ENCODE measurements at regions of chr20 and their contacts with region 1.

Region 1: GRCh38 chr20:33731693-33732165 is at the start of gene ZNF341:
- DNase-seq: no peak
- ATAC-seq: peak; percentile 79
- H3K4me3 Mint-ChIP-seq: peak within 1 kb of the TSS; percentile 90
- H3K27ac Mint-ChIP-seq: peak within 1 kb of the TSS; percentile 93
- H3K4me1 Mint-ChIP-seq: peaks cover 26% of the 10 kb centered on the region
- H3K27me3 Mint-ChIP-seq: no peaks in the 10 kb centered on the region
- CTCF ChIP-seq: no peak
- total RNA-seq, gene ZNF341: 9.2 and 10.1 TPM in 2 replicates

Region 2: DNA sequence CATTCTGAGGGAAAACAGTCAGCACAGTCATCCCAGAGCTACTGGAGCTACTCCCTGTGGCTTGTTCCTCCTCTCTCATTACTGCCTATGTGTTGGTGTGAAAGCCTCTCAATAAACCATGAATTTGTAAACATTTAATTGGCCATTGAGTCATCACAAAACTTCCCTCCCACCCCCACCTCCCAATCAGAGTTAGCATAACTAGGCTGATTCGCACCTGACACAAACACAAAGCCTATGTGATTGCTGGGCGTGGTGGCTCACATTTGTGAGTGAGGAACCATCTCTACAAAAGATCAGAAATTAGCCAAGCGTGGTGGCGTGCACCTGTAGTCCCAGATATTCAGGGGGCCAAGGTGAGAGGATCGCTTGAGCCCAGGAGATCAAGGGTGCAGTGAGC is 271.0 kb before region 1 on chr20:
- CTCF ChIA-PET with region 1: no interaction called
- POLR2A ChIA-PET with region 1: no interaction called
- intact Hi-C with region 1: loop called (anchors 1 kb)
- DNase-seq: no peak
- ATAC-seq: no peak
- H3K4me3 Mint-ChIP-seq: no peak overlapping the region
- H3K27ac Mint-ChIP-seq: no peak overlapping the region
- H3K4me1 Mint-ChIP-seq: peaks cover 18% of the 10 kb centered on the region
- H3K27me3 Mint-ChIP-seq: no peaks in the 10 kb centered on the region
- CTCF ChIP-seq: no peak

Region 3: DNA sequence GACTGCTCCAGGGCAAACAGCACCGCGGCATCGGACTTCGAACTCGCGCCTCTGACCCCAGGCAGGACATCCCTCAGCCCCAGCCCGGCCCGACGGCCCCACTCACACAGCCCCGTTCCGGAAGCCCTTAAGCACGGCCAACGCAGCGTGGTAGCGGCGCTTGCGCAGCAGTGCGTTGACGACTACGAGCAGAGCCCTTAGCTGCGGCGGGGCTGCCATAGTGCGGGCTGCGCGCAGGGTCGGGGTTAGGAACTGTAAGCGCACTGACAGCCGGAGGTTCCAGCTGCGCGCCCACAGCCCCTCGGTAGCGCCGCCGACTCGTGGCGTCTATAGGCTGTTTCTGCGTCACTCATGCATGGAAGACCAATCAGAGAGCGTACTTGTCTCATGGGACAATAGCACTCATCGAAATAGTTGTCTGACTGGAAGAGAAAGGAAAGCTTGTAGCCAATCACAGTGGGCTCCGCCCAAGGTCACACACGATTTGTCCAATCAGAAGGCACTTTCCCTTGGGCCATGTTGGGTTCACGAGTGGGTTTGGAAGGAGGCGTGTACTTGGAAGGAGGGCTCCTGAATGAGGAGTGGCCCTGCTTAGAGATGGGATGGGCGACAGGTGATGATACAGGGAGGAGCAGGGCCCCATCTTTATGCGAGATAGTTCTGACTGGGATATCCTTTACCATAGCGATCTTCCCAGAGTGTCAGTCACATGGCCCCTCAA is 11.6 kb before region 1 on chr20 and contains the start of gene PXMP4:
- CTCF ChIA-PET with region 1: no interaction called
- POLR2A ChIA-PET with region 1: interaction called, 31 read pairs
- intact Hi-C with region 1: loop called (anchors 1 kb)
- DNase-seq: peak; percentile 67
- ATAC-seq: peak; percentile 97
- H3K4me3 Mint-ChIP-seq: peak within 1 kb of the TSS; percentile 93
- H3K27ac Mint-ChIP-seq: peak within 1 kb of the TSS; percentile 91
- H3K4me1 Mint-ChIP-seq: peaks cover 27% of the 10 kb centered on the region
- H3K27me3 Mint-ChIP-seq: no peaks in the 10 kb centered on the region
- CTCF ChIP-seq: no peak
- total RNA-seq, gene PXMP4: 6.8 and 7.7 TPM in 2 replicates

Region 4: DNA sequence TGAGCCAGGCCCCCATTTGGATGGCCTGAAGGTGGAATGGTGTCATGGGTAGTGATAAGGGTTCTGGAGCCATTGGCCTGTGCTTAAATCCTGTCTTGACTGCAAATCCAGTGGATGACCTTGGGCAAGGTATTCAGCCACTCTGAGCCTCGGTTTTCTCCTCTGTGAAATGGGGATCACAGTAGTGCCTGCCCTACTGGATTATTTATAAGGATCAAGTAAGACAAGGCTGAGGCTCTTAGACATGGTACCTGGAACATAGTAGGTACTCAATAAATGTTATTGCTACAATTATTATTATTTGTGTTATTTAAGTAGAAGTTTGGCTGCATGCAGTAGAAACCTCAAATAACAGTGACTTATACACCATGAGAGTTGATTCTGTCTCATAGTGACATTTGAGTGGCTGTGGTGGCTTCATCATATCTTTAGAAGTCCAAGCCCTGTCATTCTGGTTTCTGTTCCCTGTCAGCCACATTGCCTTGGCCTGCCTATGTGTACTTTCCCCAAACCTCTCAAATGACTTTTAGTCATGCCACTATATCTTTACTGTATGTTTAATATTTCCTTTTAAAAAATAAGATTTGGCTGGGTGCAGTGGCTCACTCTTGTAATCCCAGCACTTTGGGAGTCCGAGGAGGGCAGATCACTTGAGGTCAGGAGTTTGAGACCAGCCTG is 41.8 kb after region 1 on chr20:
- CTCF ChIA-PET with region 1: interaction called, 7 read pairs
- POLR2A ChIA-PET with region 1: interaction called, 102 read pairs
- intact Hi-C with region 1: loop called (anchors 1 kb)
- DNase-seq: no peak
- ATAC-seq: peak; percentile 65
- H3K4me3 Mint-ChIP-seq: peak overlapping the region; percentile 41
- H3K27ac Mint-ChIP-seq: peak overlapping the region; percentile 93
- H3K4me1 Mint-ChIP-seq: peaks cover 64% of the 10 kb centered on the region
- H3K27me3 Mint-ChIP-seq: no peaks in the 10 kb centered on the region
- CTCF ChIP-seq: no peak

Region 5: GRCh38 chr20:33862709-33863403 is 131.1 kb after region 1 on chr20:
- CTCF ChIA-PET with region 1: interaction called, 3 read pairs
- POLR2A ChIA-PET with region 1: interaction called, 8 read pairs
- intact Hi-C with region 1: loop called (anchors 5 kb)
- DNase-seq: peak; percentile 54
- ATAC-seq: peak; percentile 60
- H3K4me3 Mint-ChIP-seq: no peak overlapping the region
- H3K27ac Mint-ChIP-seq: no peak overlapping the region
- H3K4me1 Mint-ChIP-seq: peaks cover 26% of the 10 kb centered on the region
- H3K27me3 Mint-ChIP-seq: no peaks in the 10 kb centered on the region
- CTCF ChIP-seq: no peak

Region 6: DNA sequence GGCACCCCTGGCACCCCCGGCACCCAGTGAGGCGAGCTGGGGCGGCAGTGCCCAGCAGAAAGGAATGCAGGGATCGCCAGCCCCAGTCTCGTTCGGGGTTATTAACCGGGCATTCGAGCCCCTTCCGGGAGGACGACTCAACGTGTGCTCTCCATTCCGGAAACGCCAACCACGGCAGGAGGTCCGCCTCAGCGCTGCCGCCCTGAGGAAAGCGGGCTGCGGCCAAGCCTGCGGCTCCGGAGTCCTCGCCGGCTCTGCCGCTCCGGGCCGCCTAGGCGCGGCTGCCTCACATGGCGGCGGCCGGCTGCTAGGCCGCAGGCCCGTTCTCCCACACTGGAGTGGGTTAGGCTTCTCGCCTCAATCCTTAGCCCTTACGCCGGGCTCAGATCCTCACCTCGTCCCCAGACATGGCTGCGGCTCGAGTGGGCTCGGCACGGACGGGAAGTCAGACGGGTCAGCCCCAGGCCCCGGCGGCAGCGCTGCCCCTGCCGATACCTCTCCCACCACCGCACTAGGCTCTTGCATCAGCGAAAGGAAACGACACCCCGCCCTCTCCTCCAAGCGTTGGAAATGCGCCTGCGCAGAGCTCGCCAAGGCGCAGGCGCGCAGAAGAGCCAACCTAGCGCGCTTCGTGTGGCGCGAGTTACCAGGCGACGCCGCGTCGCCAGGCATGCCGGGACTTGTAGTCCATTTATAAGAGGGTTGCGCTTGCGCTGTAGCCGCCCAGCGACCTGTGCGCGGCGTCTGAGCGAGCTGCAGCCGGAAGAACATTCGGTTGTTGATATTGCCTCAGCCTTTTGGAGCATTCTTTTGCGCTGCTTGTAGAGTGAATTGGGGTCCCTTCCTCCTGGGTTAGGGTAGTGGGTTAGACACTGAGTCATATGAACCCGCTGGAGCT is 380.2 kb after region 1 on chr20 and contains the start of gene EIF2S2:
- CTCF ChIA-PET with region 1: no interaction called
- POLR2A ChIA-PET with region 1: interaction called, 14 read pairs
- intact Hi-C with region 1: loop called (anchors 2 kb)
- DNase-seq: peak; percentile 87
- ATAC-seq: peak; percentile 84
- H3K4me3 Mint-ChIP-seq: peak within 1 kb of the TSS; percentile 96
- H3K27ac Mint-ChIP-seq: peak within 1 kb of the TSS; percentile 98
- H3K4me1 Mint-ChIP-seq: peaks cover 49% of the 10 kb centered on the region
- H3K27me3 Mint-ChIP-seq: no peaks in the 10 kb centered on the region
- CTCF ChIP-seq: no peak
- total RNA-seq, gene EIF2S2: 58.3 and 62.2 TPM in 2 replicates